ENCODE measurements at regions of chr15 and their contacts with region 1.

Region 1: DNA sequence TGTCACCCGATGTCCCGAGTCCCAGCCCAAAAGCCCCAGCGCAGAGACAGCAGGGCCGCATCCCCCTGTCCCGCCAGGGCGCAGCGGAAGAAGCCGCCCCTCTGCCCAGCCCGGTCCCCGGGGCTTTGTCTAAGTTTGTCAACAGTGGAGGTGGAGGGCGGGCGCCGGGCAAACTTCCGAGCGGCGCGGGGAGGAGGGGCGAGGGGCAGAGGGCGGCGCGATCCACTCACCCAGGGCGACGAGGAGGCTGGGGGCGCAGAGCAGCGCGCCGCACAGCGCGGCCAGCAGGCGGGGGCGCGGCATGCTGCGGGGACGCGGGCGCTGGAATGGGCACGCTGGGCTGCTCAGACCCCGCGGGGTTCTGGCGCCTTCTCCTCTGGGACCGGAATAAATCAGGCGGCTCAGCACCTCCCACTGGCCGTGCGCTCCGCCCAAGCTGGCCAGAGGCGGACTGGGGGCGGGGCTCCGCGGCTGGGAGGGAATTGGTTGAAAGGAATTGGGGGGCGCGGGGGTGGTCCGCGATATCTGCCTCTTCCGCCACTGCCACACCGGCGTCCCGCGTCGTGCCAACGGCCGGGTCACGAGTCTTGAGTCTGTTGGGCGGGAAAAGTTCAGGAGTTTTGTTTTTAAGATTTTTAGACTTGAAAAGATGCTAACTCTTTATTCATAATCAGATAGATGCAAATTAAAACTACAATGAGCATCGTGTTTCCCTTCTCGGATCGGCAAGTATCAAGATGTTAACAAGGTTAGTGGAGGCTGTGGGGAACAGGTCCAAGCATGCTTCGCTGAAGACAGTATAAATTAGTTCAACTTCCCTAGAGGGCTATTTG is at the start of gene MFGE8:
- DNase-seq: no peak
- H3K4me3 ChIP-seq: peak within 1 kb of the TSS; percentile 75
- H3K27me3 ChIP-seq: no peaks in the 10 kb centered on the region
- CTCF ChIP-seq: no peak
- polyA plus RNA-seq, gene MFGE8: 1,102 and 1,967 TPM in 2 replicates

Region 2: GRCh38 chr15:88810434-88810995 is 102.7 kb before region 1 on chr15:
- CTCF ChIA-PET with region 1: no interaction called
- POLR2A ChIA-PET with region 1: no interaction called
- DNase-seq: no peak
- H3K4me3 ChIP-seq: no peak overlapping the region
- H3K27me3 ChIP-seq: peaks cover 11% of the 10 kb centered on the region
- CTCF ChIP-seq: no peak

Region 3: GRCh38 chr15:89003865-89004725 is 90.9 kb after region 1 on chr15:
- CTCF ChIA-PET with region 1: interaction called, 18 read pairs
- POLR2A ChIA-PET with region 1: no interaction called
- DNase-seq: no peak
- H3K4me3 ChIP-seq: no peak overlapping the region
- H3K27me3 ChIP-seq: no peaks in the 10 kb centered on the region
- CTCF ChIP-seq: peak; percentile 51

Region 4: GRCh38 chr15:89017370-89018066 is 104.3 kb after region 1 on chr15:
- CTCF ChIA-PET with region 1: interaction called, 18 read pairs
- POLR2A ChIA-PET with region 1: no interaction called
- DNase-seq: no peak
- H3K4me3 ChIP-seq: peak overlapping the region; percentile 7; the same call in 1 of the 2 replicates
- H3K27me3 ChIP-seq: no peaks in the 10 kb centered on the region
- CTCF ChIP-seq: peak; percentile 94